ENCODE measurements at regions of chr3 and their contacts with region 1.

Region 1: GRCh38 chr3:69433969-69434325 is 48.1 kb upstream of the FRMD4B start:
- DNase-seq: no peak
- H3K4me3 Mint-ChIP-seq: no peak overlapping the region
- H3K27ac Mint-ChIP-seq: peak overlapping the region; percentile 54
- H3K4me1 Mint-ChIP-seq: peaks cover 51% of the 10 kb centered on the region
- H3K27me3 Mint-ChIP-seq: no peaks in the 10 kb centered on the region

Region 2: GRCh38 chr3:69020424-69020823 is 413.5 kb before region 1 on chr3:
- intact Hi-C with region 1: no loop called
- DNase-seq: no peak
- H3K4me3 Mint-ChIP-seq: no peak overlapping the region
- H3K27ac Mint-ChIP-seq: no peak overlapping the region
- H3K4me1 Mint-ChIP-seq: peaks cover 23% of the 10 kb centered on the region
- H3K27me3 Mint-ChIP-seq: no peaks in the 10 kb centered on the region

Region 3: DNA sequence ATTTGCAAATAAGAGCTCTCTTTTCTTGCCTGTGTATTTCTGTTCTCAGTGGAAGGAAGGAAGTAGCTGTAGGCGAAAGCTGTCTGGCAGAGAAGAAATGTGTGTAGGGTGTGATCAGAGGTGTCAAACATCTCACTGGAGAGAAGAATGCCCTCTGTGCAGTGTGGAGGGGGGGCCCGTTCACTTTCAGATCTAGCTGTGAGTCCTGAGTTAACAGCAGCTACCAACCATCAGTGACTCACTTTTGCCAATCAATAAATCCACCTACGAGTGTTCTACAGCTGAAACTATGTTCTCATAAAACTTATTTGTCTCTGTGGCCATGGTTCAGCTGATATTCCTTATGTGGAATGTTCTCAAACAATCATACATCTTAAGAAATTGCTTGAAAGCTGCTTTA is 151.8 kb before region 1 on chr3:
- intact Hi-C with region 1: loop called (anchors 1 kb)
- DNase-seq: peak; percentile 12
- H3K4me3 Mint-ChIP-seq: peak overlapping the region; percentile 19
- H3K27ac Mint-ChIP-seq: peak overlapping the region; percentile 84
- H3K4me1 Mint-ChIP-seq: peaks cover 45% of the 10 kb centered on the region
- H3K27me3 Mint-ChIP-seq: no peaks in the 10 kb centered on the region

Region 4: DNA sequence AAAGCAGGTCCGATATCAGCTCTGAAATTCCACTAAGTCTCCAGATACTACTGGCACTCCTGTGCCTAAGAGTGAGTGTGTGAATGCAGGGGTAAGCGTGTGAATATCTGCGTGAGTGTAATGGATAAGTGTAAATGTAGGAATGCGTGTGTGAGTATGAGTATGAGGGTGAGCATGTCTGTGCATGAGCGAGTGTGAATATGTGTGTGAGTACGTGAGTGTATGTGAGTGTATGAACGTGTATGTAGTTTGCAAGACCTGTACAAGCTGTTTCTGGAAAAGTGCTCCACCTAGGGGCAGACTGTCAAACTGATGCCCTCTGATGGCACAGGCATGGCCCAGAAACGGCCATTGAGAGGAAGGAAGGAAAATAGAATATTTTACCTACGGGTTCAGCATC is 23.7 kb before region 1 on chr3:
- intact Hi-C with region 1: loop called (anchors 2 kb)
- DNase-seq: peak; percentile 57
- H3K4me3 Mint-ChIP-seq: no peak overlapping the region
- H3K27ac Mint-ChIP-seq: no peak overlapping the region
- H3K4me1 Mint-ChIP-seq: peaks cover 11% of the 10 kb centered on the region
- H3K27me3 Mint-ChIP-seq: peaks cover 9% of the 10 kb centered on the region

Region 5: DNA sequence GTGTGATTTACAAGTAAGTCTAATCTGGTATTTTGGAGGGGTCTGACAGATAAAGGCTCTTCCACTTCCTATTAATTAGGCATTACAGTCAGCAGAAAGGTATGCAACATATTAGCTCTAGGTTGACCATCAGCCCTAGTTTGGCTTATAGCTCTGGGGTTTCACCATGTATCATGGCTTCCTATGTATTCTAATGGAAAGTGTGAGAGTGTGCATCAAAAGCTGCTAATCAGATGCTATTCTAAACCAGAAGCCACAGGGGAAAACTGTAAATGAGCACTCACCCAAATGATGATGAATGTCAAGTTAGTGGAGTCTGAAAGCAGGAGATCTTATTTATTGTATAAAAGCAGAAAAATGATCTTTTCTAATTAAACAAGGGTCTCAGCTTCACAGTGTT is 156.2 kb after region 1 on chr3:
- intact Hi-C with region 1: no loop called
- DNase-seq: no peak
- H3K4me3 Mint-ChIP-seq: no peak overlapping the region
- H3K27ac Mint-ChIP-seq: no peak overlapping the region
- H3K4me1 Mint-ChIP-seq: no peaks in the 10 kb centered on the region
- H3K27me3 Mint-ChIP-seq: no peaks in the 10 kb centered on the region

Region 6: DNA sequence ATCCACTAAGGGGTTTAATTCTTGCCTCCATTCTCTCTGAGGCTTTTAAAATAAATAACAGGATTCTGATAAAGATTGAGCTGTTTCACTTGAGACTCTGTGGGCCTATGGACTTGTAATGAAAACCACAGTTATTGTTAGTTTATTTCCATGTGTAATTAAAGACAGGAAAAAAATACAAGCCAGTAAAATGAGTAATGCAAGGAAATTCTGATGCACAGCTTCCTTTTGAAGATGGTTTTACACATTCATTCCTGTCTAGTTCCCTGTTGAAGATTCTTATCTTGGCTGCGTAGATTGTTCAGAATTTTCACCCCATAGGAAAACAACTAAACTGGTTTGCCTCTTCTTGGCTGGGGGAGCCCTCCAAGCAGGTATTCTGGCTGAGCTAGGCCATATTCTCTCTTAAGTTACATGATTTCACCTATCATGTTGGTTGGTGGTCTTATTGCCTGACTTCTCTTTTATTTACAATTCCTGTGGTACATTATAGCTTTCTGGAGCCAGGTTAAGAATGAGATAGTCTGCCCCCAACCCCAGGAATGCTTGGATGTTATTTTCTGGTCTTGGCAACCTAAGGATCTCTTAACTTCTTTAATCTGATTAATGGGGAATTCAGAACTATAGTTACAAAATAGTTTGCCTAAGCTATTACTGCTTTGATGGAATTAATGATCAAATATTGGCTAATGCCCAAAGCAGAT is 372.9 kb after region 1 on chr3:
- intact Hi-C with region 1: no loop called
- DNase-seq: no peak
- H3K4me3 Mint-ChIP-seq: no peak overlapping the region
- H3K27ac Mint-ChIP-seq: no peak overlapping the region
- H3K4me1 Mint-ChIP-seq: no peaks in the 10 kb centered on the region
- H3K27me3 Mint-ChIP-seq: no peaks in the 10 kb centered on the region

Region 7: DNA sequence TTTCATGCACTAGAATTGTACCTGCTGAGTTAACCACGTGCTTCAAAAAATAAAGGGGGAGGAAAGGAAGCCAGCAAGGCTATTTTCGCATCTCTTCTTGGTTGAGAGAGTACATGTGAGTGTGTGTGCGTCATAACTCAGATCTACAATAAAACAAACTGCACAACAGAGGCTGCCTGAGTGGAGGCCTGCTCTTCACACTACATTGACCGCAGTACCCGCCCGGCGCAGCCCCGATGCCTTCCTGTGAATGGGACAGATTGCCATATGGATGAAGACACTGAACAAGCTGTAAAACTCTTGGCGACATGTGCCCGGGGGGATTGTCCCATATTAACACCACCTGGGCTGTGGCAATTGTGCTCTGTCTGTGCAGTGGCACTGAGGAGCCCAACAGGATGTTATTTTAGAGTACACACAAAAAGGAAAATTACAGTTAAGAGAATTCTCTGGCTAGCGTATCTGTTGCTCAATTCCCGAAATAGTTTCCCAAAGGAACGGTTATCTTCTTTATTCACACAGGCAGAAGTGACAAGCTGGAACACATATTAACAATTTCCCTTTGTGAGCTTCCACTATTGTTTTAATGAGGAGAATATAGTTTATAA is 1598.1 kb after region 1 on chr3:
- intact Hi-C with region 1: no loop called
- DNase-seq: no peak
- H3K4me3 Mint-ChIP-seq: no peak overlapping the region
- H3K27ac Mint-ChIP-seq: no peak overlapping the region
- H3K4me1 Mint-ChIP-seq: peaks cover 33% of the 10 kb centered on the region
- H3K27me3 Mint-ChIP-seq: peaks cover 1% of the 10 kb centered on the region